AG04450 (cell line): ENCODE measurements at regions of chr10 and their contacts with region 1.

Region 1: DNA sequence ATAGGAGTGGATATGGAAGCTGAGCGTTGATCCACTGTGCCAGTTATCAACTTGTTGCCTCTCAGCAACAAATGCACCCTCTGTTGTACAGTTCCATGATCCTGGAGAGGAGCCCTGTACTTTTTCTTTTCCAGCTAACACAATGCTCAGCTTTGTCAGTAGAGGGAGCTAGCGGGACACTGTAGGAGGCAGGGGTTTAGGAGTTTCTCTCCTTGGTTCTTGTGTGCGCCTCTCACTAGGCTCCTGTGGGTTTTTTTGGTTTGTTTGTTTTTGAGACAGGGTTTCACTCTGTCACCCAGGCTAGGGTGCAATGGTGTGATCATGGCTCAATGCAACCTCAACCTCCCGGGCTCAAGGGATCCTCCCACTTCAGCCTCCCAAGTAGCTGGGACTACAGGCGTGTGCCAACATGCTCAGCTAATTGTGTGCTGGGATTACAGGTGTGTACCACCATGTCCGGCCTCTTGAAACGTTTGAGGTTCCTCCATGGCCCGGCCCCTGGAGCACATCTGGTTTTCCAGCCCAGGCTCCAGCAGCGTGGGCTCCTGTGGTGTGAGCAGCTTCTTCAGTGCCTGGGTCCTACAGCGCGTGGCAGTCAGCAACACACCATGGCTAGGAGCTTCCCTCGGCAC is 12.0 kb upstream of the MARVELD1 start:
- DNase-seq: peak; percentile 61
- H3K4me3 ChIP-seq: no peak overlapping the region
- H3K27ac ChIP-seq: no peak overlapping the region
- H3K27me3 ChIP-seq: no peaks in the 10 kb centered on the region
- CTCF ChIP-seq: peak; percentile 94

Region 2: DNA sequence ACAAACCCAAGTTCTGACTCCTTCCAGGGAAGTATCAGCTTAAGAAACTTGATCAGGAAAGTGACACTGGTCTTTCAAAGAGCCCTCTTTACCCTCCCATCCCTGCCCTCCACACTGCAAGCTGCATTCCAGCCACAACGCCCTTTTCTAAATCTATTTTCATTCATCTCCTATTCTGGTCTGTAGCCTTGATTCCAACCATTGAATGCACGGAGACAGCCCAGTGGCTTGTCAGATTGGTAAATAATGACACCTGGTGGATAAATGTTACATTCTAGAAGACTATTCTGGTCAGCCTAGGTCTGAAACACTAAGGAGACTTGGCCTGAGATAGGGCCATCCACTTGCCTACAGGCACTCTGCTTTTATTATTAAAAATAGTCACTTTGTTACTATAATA is 89.2 kb before region 1 on chr10:
- CTCF ChIA-PET with region 1: no interaction called
- POLR2A ChIA-PET with region 1: no interaction called
- DNase-seq: peak; percentile 15
- H3K4me3 ChIP-seq: no peak overlapping the region
- H3K27ac ChIP-seq: no peak overlapping the region
- H3K27me3 ChIP-seq: no peaks in the 10 kb centered on the region
- CTCF ChIP-seq: peak; percentile 32; the same call in 1 of the 2 replicates

Region 3: GRCh38 chr10:97724341-97724941 is 22.9 kb after region 1 on chr10:
- CTCF ChIA-PET with region 1: interaction called, 316 read pairs
- POLR2A ChIA-PET with region 1: interaction called, 3 read pairs
- DNase-seq: no peak
- H3K4me3 ChIP-seq: no peak overlapping the region
- H3K27ac ChIP-seq: peak overlapping the region; percentile 31
- H3K27me3 ChIP-seq: no peaks in the 10 kb centered on the region
- CTCF ChIP-seq: no peak